ENCODE measurements at regions of chr11 and their contacts with region 1.

Region 1: GRCh38 chr11:108222686-108223448 is at the start of gene ATM:
- DNase-seq: peak; percentile 99
- H3K4me3 Mint-ChIP-seq: no peak within 1 kb of the TSS
- H3K27ac Mint-ChIP-seq: no peak within 1 kb of the TSS
- H3K4me1 Mint-ChIP-seq: peaks cover 46% of the 10 kb centered on the region
- H3K27me3 Mint-ChIP-seq: no peaks in the 10 kb centered on the region
- total RNA-seq, gene ATM: 34.1 and 34.7 TPM in 2 replicates

Region 2: GRCh38 chr11:108121274-108122155 is 101.4 kb before region 1 on chr11 and contains the start of gene ACAT1:
- intact Hi-C with region 1: loop called (anchors 1 kb)
- DNase-seq: peak; percentile 95
- H3K4me3 Mint-ChIP-seq: peak within 1 kb of the TSS; percentile 95
- H3K27ac Mint-ChIP-seq: peak within 1 kb of the TSS; percentile 90
- H3K4me1 Mint-ChIP-seq: peaks cover 40% of the 10 kb centered on the region
- H3K27me3 Mint-ChIP-seq: no peaks in the 10 kb centered on the region
- total RNA-seq, gene ACAT1: 66.8 and 76.6 TPM in 2 replicates

Region 3: GRCh38 chr11:108237058-108237481 is 14.2 kb after region 1 on chr11:
- intact Hi-C with region 1: loop called (anchors 1 kb)
- DNase-seq: no peak
- H3K4me3 Mint-ChIP-seq: peak overlapping the region; percentile 66
- H3K27ac Mint-ChIP-seq: peak overlapping the region; percentile 83
- H3K4me1 Mint-ChIP-seq: peaks cover 59% of the 10 kb centered on the region
- H3K27me3 Mint-ChIP-seq: no peaks in the 10 kb centered on the region

Region 4: DNA sequence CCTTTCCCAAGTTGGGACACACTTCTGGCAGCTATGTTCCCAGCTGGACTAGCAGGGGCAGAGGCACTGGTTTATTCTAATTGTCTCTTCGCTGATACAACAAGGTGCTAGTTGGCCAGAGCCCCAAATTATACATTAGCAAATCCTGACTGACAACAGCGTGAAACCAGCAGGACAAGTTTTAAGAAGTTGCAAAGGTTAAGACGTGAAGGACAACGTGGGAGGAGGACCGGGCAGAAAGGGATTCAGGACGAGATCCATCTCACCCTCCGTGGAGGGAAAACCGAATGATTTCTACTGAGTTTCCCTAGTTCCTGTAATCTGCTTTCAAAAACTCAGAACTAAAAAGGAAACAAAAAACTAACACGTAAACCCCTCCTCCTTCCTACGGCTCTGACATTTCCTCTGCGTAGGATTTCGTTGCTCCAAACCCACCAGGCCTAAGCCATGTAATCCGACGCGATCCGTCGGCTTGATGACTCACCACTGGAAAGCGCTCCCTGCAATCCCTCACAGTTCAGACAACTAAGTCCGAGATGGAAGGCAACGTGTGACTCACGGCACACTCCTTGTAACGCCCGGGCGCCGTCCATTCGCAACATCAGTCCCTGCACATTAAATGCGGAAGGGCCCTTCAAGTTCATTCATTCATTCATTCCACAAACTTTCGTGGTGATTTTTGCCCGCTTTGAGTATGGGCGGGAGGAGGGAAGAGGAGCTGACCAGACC is 274.6 kb after region 1 on chr11:
- intact Hi-C with region 1: loop called (anchors 1 kb)
- DNase-seq: peak; percentile 68
- H3K4me3 Mint-ChIP-seq: peak overlapping the region; percentile 93
- H3K27ac Mint-ChIP-seq: peak overlapping the region; percentile 98
- H3K4me1 Mint-ChIP-seq: peaks cover 23% of the 10 kb centered on the region
- H3K27me3 Mint-ChIP-seq: peaks cover 4% of the 10 kb centered on the region

Region 5: GRCh38 chr11:108733479-108734116 is 510.7 kb after region 1 on chr11:
- intact Hi-C with region 1: loop called (anchors 1 kb)
- DNase-seq: peak; percentile 18
- H3K4me3 Mint-ChIP-seq: peak overlapping the region; percentile 56
- H3K27ac Mint-ChIP-seq: peak overlapping the region; percentile 86
- H3K4me1 Mint-ChIP-seq: peaks cover 50% of the 10 kb centered on the region
- H3K27me3 Mint-ChIP-seq: no peaks in the 10 kb centered on the region

Measured in activated T-helper 2 cell treated with anti-CD3 and anti-CD28 coated beads, Interferon-gamma antibody, Interleukin-2, Interleukin-4, amounts not matched to agents 10 μg/mL and 5 μg/mL and 100 μg/mL, durations not matched to agents 14 hours and 24 hours and 36 hours (primary cell).